Activated naive CD4-positive, alpha-beta T cell treated with anti-CD3 and anti-CD28 coated beads for 36 hours (primary cell): ENCODE measurements at regions of chr6 and their contacts with region 1.

Region 1: DNA sequence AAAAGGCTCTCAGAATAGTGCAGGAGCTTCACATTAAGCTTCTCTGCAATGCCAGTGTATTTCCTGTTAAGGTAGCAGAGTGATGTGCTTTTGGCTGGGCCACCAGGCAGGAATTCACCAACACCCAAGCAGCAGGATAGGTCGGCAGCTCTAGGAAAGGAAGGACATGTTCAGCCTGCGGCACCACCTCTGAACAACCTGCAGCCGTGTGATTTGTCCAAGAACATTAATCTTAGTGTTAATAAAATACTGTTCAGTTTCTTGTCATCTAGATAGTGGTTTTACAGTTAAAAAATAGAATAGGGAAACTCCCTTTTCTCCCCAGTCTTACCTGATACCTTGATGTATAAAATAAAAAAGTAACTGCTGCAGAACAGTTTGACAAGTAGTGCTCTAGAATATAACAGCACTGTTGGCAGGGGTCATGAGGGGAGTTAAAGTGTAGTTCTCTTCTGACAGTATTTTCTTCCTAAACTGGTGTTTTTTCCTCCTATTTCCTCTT is 18.8 kb downstream of the ZNF292 start:
- DNase-seq: no peak
- H3K4me3 Mint-ChIP-seq: peak overlapping the region; percentile 13
- H3K27ac Mint-ChIP-seq: peak overlapping the region; percentile 30
- H3K4me1 Mint-ChIP-seq: peaks cover 75% of the 10 kb centered on the region
- H3K27me3 Mint-ChIP-seq: no peaks in the 10 kb centered on the region

Region 2: GRCh38 chr6:87164004-87164403 is 10.1 kb before region 1 on chr6:
- CTCF ChIA-PET with region 1: interaction called, 5 read pairs
- intact Hi-C with region 1: loop called (anchors 1 kb)
- DNase-seq: no peak
- H3K4me3 Mint-ChIP-seq: no peak overlapping the region
- H3K27ac Mint-ChIP-seq: no peak overlapping the region
- H3K4me1 Mint-ChIP-seq: peaks cover 74% of the 10 kb centered on the region
- H3K27me3 Mint-ChIP-seq: no peaks in the 10 kb centered on the region